Activated CD4-positive, alpha-beta T cell treated with anti-CD3 and anti-CD28 coated beads, Interleukin-2, amount 10 ng/mL, durations not matched to agents 24 days and 14 days (primary cell): ENCODE measurements at regions of chr7 and their contacts with region 1.

Region 1: DNA sequence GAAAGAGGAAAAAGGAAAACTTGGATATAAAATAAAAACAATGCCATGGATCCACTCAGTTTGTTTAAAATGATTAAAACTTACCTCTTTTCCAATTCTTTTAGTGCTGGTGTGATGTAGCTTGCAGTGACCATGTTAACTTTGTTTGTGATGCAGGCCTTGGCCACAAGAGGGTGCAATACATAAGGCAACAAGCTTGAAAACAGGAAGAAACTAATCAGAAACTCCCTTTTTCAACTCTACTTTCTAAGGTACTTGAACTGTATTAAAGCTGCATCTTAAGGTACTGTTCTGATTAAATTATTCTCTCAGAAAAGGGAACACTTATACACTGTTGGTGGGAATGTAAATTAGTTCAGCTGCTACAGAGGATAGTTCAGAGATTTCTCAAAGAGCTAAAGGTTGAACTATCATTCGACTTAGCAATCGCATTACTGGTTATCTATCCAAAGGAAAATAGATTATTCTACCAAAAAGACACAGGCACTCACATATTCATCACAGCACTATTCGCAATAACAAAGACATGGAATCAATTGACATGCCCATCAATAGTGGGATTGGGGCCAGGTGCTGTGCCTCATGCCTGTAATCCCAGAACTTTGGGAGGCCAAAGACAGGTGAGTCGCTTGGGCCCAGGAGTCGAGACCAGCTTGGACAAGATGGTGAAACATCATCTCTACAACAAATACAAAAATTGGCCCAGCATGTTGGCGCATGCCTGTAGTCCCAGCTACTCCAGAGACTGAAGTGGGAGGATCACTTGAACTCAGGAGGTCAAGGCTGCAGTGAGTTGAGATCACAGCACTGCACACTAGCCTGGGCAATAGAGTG is 50.9 kb downstream of the AASS start:
- DNase-seq: peak; percentile 87
- H3K4me3 Mint-ChIP-seq: no peak overlapping the region
- H3K27ac Mint-ChIP-seq: no peak overlapping the region
- H3K4me1 Mint-ChIP-seq: no peaks in the 10 kb centered on the region
- H3K27me3 Mint-ChIP-seq: no peaks in the 10 kb centered on the region

Region 2: GRCh38 chr7:122027058-122027457 is 66.1 kb before region 1 on chr7:
- intact Hi-C with region 1: no loop called
- DNase-seq: no peak
- H3K4me3 Mint-ChIP-seq: no peak overlapping the region
- H3K27ac Mint-ChIP-seq: no peak overlapping the region
- H3K4me1 Mint-ChIP-seq: no peaks in the 10 kb centered on the region
- H3K27me3 Mint-ChIP-seq: no peaks in the 10 kb centered on the region

Region 3: GRCh38 chr7:122166708-122167107 is 73.5 kb after region 1 on chr7:
- intact Hi-C with region 1: no loop called
- DNase-seq: no peak
- H3K4me3 Mint-ChIP-seq: no peak overlapping the region
- H3K27ac Mint-ChIP-seq: no peak overlapping the region
- H3K4me1 Mint-ChIP-seq: no peaks in the 10 kb centered on the region
- H3K27me3 Mint-ChIP-seq: no peaks in the 10 kb centered on the region

Region 4: DNA sequence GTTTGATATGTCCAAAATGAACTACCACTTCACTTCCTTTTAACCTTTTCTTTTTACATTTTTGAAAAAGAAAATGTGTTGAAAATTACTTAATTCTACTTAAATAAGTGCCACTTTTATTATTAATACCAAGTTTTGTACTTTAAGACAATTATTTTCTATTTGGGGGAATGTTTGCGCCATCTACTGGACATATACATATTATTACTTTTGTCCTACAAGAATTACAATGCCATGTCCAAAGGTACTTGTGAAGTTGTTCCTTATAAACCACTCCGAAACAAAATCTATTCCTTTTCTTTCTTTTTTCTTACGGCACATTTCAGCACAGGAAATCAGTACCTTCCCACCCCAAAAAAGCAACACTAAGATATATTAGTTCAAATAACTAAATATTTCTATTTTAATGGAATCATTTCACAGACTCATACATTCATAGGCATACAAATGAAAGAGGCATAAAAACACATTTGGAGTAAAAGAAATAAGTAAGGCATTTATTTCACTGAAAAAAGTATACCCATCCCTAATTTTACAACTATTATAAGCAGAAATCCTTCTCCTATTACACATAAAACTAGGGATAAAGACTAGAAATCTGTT is 435.8 kb after region 1 on chr7:
- intact Hi-C with region 1: loop called (anchors 1 kb)
- DNase-seq: no peak
- H3K4me3 Mint-ChIP-seq: no peak overlapping the region
- H3K27ac Mint-ChIP-seq: no peak overlapping the region
- H3K4me1 Mint-ChIP-seq: no peaks in the 10 kb centered on the region
- H3K27me3 Mint-ChIP-seq: no peaks in the 10 kb centered on the region